B cell (primary cell): ENCODE measurements at regions of chr7 and their contacts with region 1.

Region 1: GRCh38 chr7:12211054-12211710 is at the start of gene TMEM106B:
- DNase-seq: peak; percentile 97
- ATAC-seq: peak; percentile 90
- H3K4me3 ChIP-seq: peak within 1 kb of the TSS; percentile 76 to 100 (median 82)
- H3K4me3 Mint-ChIP-seq: peak within 1 kb of the TSS; percentile 94
- H3K27ac ChIP-seq: peak within 1 kb of the TSS; percentile 87 to 90
- H3K27ac Mint-ChIP-seq: peak within 1 kb of the TSS; percentile 95
- H3K4me1 ChIP-seq: peaks cover 12 to 13% of the 10 kb centered on the region in 2 donors
- H3K4me1 Mint-ChIP-seq: peaks cover 26% of the 10 kb centered on the region
- H3K27me3 ChIP-seq: peaks cover 0 to 4% (median 2%) of the 10 kb centered on the region in 4 experiments
- H3K27me3 Mint-ChIP-seq: peaks cover 19% of the 10 kb centered on the region
- CTCF ChIP-seq: no peak
- total RNA-seq, gene TMEM106B: 28.3 and 30.2 TPM in 2 replicates

Region 2: DNA sequence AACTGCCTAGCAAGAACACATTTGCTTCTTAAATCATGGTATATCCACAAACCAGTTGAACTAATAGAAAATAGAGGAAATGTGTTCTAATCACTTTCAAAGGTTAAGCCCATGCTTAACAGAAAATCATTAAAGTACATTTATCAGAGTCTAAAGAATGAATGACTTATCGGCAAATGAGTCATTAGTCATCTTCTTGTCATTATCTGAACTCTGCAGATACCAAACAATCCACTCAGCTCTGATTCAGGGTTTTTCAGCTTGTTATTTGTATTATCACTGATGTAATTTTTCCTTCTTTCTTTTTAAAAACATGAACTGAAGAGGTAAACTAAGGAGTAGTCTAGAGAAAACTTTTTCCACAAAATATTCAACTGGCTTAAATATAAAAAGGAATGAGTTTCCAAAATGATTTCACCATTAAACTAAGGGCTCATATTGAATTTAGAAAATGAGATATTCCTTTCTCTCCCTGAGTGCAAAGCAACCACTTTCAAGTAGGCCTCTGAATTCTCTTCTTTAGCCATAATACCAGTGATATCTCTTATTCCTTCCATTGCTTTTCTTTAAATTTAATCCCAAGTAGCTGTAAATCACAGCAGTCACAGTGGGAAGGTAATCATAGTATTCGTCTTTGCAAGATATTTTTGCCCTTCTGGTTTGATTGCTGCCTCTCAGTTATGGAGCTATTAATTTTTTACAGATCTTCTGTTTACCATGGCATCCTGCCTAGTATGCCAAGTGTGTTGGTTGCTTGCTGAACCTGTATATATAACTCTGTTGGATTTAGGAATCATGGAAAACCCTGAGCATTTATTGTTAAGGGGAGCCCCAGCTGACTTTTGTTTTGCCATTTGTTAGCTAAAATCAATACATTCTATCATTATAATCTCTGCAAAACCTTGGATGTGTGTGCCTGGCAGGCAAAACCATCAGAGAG is 504.2 kb before region 1 on chr7:
- CTCF ChIA-PET with region 1: no interaction called
- POLR2A ChIA-PET with region 1: no interaction called
- intact Hi-C with region 1: no loop called
- DNase-seq: no peak
- ATAC-seq: no peak
- H3K4me3 ChIP-seq: no peak overlapping the region
- H3K4me3 Mint-ChIP-seq: no peak overlapping the region
- H3K27ac ChIP-seq: no peak overlapping the region
- H3K27ac Mint-ChIP-seq: no peak overlapping the region
- H3K4me1 ChIP-seq: no peaks in the 10 kb centered on the region
- H3K4me1 Mint-ChIP-seq: no peaks in the 10 kb centered on the region
- H3K27me3 ChIP-seq: no peaks in the 10 kb centered on the region
- H3K27me3 Mint-ChIP-seq: no peaks in the 10 kb centered on the region
- CTCF ChIP-seq: no peak

Region 3: DNA sequence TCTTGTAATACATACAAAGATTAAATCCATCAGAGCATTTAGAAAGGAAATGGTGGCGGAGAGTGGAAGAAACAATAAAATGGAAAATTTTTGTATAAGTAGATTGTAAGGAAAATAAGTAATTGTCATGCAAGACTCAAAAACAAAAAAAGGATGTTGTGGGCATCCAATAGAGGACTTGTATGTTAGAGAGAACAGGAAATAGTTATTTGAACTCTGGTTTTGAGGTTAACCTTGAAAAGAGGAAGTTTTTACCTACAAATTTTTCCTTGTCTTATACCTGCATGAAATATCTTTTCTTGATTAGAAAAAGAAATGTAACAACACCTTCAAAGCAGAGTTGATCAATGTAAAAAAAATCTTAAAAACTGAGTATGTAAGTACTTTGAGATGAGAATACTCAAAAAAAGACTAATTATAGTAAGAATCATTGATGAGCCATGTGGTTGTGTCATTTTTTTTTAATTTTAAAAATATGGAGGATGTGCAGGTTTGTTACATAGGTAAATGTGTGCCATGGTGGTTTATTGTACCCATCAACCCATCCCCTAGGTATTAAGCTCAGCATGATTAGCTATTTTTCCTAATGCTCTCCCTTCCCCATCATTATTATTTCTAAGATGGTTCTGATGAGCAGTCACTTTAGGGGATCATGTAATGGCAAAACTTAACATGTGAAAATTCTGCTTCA is 11.9 kb after region 1 on chr7:
- CTCF ChIA-PET with region 1: no interaction called
- POLR2A ChIA-PET with region 1: interaction called, 3 read pairs
- intact Hi-C with region 1: loop called (anchors 1 kb)
- DNase-seq: peak; percentile 61
- ATAC-seq: peak; percentile 69
- H3K4me3 ChIP-seq: no peak overlapping the region
- H3K4me3 Mint-ChIP-seq: no peak overlapping the region
- H3K27ac ChIP-seq: no peak overlapping the region
- H3K27ac Mint-ChIP-seq: no peak overlapping the region
- H3K4me1 ChIP-seq: peaks cover 8 to 16% of the 10 kb centered on the region in 2 donors
- H3K4me1 Mint-ChIP-seq: peaks cover 23% of the 10 kb centered on the region
- H3K27me3 ChIP-seq: no peaks in the 10 kb centered on the region
- H3K27me3 Mint-ChIP-seq: no peaks in the 10 kb centered on the region
- CTCF ChIP-seq: no peak

Region 4: DNA sequence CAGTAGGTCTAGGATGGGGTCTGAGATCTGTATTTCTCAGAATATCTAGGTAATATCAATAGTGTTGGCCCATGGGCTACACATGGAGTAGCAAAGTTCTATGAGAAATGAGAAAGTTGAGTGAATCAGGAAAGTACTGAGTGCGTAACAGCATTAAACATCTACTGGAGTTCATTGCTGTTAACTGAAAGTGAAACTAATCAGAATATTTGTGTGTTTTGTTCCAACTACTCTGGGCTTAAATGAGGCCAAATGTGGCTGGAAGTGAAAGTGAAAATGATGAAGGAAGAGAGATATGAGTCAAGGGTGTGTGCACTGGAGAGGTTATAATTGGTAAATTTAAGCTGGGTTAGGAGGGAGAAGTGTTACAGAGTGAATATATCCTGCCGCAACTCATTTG is 46.4 kb after region 1 on chr7:
- CTCF ChIA-PET with region 1: interaction called, 4 read pairs
- POLR2A ChIA-PET with region 1: no interaction called
- intact Hi-C with region 1: loop called (anchors 1 kb)
- DNase-seq: peak; percentile 77
- ATAC-seq: peak; percentile 97
- H3K4me3 ChIP-seq: peak overlapping the region; percentile 4 to 63 (median 36)
- H3K4me3 Mint-ChIP-seq: no peak overlapping the region
- H3K27ac ChIP-seq: peak overlapping the region; percentile 48 to 61
- H3K27ac Mint-ChIP-seq: no peak overlapping the region
- H3K4me1 ChIP-seq: peaks cover 15 to 16% of the 10 kb centered on the region in 2 donors
- H3K4me1 Mint-ChIP-seq: no peaks in the 10 kb centered on the region
- H3K27me3 ChIP-seq: no peaks in the 10 kb centered on the region
- H3K27me3 Mint-ChIP-seq: no peaks in the 10 kb centered on the region
- CTCF ChIP-seq: no peak